ENCODE measurements at regions of chr9 and their contacts with region 1.

Region 1: DNA sequence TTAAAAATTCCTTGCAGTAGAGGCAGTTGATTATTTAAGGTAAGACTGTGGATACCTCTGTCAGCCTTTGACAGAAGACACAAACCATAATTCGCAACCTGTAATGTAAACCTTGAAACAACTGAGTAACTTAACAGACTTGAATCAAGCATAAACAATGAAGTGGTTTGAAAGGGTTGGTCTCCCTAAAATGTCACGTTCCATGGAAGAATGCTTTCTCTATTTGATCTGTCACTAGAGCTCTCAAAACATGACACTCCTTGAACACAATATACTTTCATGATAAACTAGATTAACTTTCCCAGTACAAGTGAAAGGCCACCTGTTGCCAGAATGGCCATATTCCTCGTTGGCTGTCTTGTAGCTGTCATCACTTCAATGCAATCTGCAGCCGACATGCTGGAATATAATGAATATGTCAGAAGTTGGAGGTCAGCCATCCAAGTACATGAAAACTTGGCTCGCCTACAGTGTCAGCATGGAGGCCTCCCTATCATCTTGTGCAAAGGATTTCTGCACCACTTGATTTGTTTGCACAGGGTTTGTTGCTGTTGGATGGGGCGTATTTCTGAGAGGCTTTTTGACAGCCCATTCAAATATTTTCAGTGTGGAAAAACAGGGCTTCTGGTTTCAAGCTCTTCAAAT is 228.0 kb downstream of the TLE4 start:
- DNase-seq: peak; percentile 86
- H3K4me3 ChIP-seq: no peak overlapping the region
- H3K27ac ChIP-seq: no peak overlapping the region
- H3K4me1 ChIP-seq: peaks cover 17% of the 10 kb centered on the region
- H3K27me3 ChIP-seq: no peaks in the 10 kb centered on the region
- CTCF ChIP-seq: no peak
- POLR2A ChIP-seq: no peak

Region 2: GRCh38 chr9:79809931-79810330 is 10.1 kb after region 1 on chr9:
- CTCF ChIA-PET with region 1: interaction called, 6 read pairs
- POLR2A ChIA-PET with region 1: no interaction called
- dilution Hi-C with region 1: no loop called
- intact Hi-C with region 1: loop called (anchors 1 kb)
- DNase-seq: peak; percentile 72
- H3K4me3 ChIP-seq: peak overlapping the region in 1 of 3 experiments; percentile 44
- H3K27ac ChIP-seq: peak overlapping the region; percentile 31
- H3K4me1 ChIP-seq: peaks cover 23% of the 10 kb centered on the region
- H3K27me3 ChIP-seq: no peaks in the 10 kb centered on the region
- CTCF ChIP-seq: no peak
- POLR2A ChIP-seq: no peak

Region 3: DNA sequence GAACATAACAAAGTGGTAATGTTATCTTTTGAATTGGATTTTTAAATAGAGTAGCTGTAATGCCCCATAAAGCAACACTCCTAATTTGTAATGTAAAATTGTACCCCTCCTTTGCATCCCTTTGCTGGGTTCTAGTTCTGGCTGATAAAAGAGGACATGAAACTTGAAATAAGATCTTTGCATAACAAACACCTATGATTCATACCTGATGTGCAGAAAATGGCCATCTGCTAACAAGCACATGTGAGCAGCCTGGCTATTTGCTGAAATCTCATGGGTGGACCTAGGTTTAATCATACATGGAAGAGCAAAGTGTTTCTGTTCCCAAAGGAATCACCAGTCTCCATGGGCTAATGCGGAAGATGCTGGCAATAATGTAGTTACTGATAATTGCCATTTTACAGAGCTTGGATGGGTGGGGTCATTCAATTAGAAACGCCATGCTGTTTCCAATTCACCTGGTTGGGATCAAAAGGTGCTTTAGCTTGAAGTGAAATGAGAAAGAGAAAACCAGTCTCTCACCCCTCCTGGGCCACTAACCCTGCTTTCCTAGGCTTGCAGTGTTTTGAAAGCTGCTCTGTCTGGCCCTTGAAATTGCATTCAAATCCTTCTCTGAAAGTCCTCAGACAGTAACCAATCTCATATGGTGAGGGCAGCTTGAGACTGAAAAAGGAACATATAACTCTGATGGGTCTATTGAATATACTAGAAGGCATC is 357.1 kb after region 1 on chr9:
- CTCF ChIA-PET with region 1: no interaction called
- POLR2A ChIA-PET with region 1: no interaction called
- dilution Hi-C with region 1: no loop called
- intact Hi-C with region 1: loop called (anchors 5 kb)
- DNase-seq: no peak
- H3K4me3 ChIP-seq: no peak overlapping the region
- H3K27ac ChIP-seq: no peak overlapping the region
- H3K4me1 ChIP-seq: peaks cover 18% of the 10 kb centered on the region
- H3K27me3 ChIP-seq: no peaks in the 10 kb centered on the region
- CTCF ChIP-seq: no peak
- POLR2A ChIP-seq: no peak

Measured in endothelial cell of umbilical vein (primary cell).